ENCODE measurements at regions of chr1 and their contacts with region 1.

Region 1: GRCh38 chr1:203267347-203267846 is 37.9 kb upstream of the BTG2 start:
- DNase-seq: peak; percentile 92
- ATAC-seq: peak; percentile 63
- H3K4me3 ChIP-seq: peak overlapping the region; percentile 58 to 77 (median 65)
- H3K4me3 Mint-ChIP-seq: peak overlapping the region; percentile 89
- H3K27ac ChIP-seq: peak overlapping the region; percentile 45 to 58
- H3K27ac Mint-ChIP-seq: peak overlapping the region; percentile 76
- H3K4me1 ChIP-seq: peaks cover 30 to 40% of the 10 kb centered on the region in 2 donors
- H3K4me1 Mint-ChIP-seq: peaks cover 32% of the 10 kb centered on the region
- H3K27me3 ChIP-seq: no peaks in the 10 kb centered on the region
- H3K27me3 Mint-ChIP-seq: no peaks in the 10 kb centered on the region
- CTCF ChIP-seq: peak; percentile 92

Region 2: GRCh38 chr1:203038891-203039608 is 228.3 kb before region 1 on chr1:
- CTCF ChIA-PET with region 1: interaction called, 30 read pairs
- POLR2A ChIA-PET with region 1: no interaction called
- intact Hi-C with region 1: no loop called
- DNase-seq: peak; percentile 73
- ATAC-seq: peak; percentile 78
- H3K4me3 ChIP-seq: no peak overlapping the region
- H3K4me3 Mint-ChIP-seq: no peak overlapping the region
- H3K27ac ChIP-seq: no peak overlapping the region
- H3K27ac Mint-ChIP-seq: no peak overlapping the region
- H3K4me1 ChIP-seq: peaks cover 0 to 2% of the 10 kb centered on the region in 2 donors
- H3K4me1 Mint-ChIP-seq: peaks cover 1% of the 10 kb centered on the region
- H3K27me3 ChIP-seq: peaks cover 0 to 10% (median 2%) of the 10 kb centered on the region in 4 experiments
- H3K27me3 Mint-ChIP-seq: peaks cover 12% of the 10 kb centered on the region
- CTCF ChIP-seq: peak; percentile 93

Region 3: GRCh38 chr1:203172128-203173010 is 95.0 kb before region 1 on chr1:
- CTCF ChIA-PET with region 1: no interaction called
- POLR2A ChIA-PET with region 1: no interaction called
- intact Hi-C with region 1: no loop called
- DNase-seq: peak; percentile 45
- ATAC-seq: no peak
- H3K4me3 ChIP-seq: no peak overlapping the region
- H3K4me3 Mint-ChIP-seq: no peak overlapping the region
- H3K27ac ChIP-seq: no peak overlapping the region
- H3K27ac Mint-ChIP-seq: no peak overlapping the region
- H3K4me1 ChIP-seq: peaks cover 0 to 8% of the 10 kb centered on the region in 2 donors
- H3K4me1 Mint-ChIP-seq: peaks cover 1% of the 10 kb centered on the region
- H3K27me3 ChIP-seq: peaks cover 0 to 6% (median 0%) of the 10 kb centered on the region in 4 experiments
- H3K27me3 Mint-ChIP-seq: peaks cover 7% of the 10 kb centered on the region
- CTCF ChIP-seq: peak; percentile 70

Region 4: DNA sequence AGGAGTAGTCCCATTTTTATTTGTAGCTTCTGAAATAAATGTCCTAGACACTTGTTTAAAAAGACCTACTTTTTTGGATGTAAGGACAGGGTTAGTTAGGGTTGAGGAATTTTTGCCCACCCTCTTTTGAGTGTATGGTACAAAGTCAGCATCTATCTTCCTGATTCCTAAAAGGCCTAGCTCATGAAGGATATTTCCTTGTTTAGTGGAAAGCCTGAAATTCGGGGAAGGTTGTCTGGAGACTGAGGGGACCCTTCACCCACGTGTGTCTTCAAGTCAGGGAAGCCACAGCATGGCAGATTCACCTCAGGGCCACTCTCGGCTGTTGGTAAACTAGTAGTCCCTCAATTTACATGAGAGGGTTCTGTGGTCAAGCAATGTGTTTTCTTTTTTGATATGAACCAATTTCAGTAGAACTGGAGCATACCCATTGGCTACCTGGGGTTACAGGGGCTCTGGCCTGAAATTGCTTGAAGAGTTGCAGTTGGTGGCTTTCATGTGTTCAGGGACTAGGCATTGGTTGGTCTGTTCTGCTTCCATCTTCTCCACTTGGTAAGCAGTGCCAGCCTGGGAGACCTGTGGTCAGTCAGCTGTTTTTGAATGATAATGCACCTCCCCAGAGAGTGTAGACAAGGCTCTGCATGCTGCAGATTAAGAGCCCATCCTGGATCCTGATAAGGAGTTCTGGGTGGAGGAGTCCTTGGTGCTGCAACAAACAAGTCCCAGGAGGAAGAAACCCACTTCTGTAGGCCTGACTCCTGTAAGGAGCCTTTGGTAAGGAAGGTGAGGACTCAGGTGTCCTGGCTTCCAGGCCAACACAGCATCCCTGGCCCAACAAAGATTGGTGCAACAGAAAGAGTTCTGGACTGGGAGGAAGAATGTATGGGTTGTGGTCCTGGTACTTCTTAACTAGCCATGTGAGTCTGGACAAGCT is 44.2 kb after region 1 on chr1:
- CTCF ChIA-PET with region 1: interaction called, 396 read pairs
- POLR2A ChIA-PET with region 1: interaction called, 307 read pairs
- intact Hi-C with region 1: no loop called
- DNase-seq: no peak
- ATAC-seq: no peak
- H3K4me3 ChIP-seq: no peak overlapping the region
- H3K4me3 Mint-ChIP-seq: peak overlapping the region; percentile 99
- H3K27ac ChIP-seq: peak overlapping the region in 1 of 2 donors; percentile 26
- H3K27ac Mint-ChIP-seq: peak overlapping the region; percentile 83
- H3K4me1 ChIP-seq: peaks cover 53 to 63% of the 10 kb centered on the region in 2 donors
- H3K4me1 Mint-ChIP-seq: peaks cover 63% of the 10 kb centered on the region
- H3K27me3 ChIP-seq: no peaks in the 10 kb centered on the region
- H3K27me3 Mint-ChIP-seq: no peaks in the 10 kb centered on the region
- CTCF ChIP-seq: no peak

Region 5: DNA sequence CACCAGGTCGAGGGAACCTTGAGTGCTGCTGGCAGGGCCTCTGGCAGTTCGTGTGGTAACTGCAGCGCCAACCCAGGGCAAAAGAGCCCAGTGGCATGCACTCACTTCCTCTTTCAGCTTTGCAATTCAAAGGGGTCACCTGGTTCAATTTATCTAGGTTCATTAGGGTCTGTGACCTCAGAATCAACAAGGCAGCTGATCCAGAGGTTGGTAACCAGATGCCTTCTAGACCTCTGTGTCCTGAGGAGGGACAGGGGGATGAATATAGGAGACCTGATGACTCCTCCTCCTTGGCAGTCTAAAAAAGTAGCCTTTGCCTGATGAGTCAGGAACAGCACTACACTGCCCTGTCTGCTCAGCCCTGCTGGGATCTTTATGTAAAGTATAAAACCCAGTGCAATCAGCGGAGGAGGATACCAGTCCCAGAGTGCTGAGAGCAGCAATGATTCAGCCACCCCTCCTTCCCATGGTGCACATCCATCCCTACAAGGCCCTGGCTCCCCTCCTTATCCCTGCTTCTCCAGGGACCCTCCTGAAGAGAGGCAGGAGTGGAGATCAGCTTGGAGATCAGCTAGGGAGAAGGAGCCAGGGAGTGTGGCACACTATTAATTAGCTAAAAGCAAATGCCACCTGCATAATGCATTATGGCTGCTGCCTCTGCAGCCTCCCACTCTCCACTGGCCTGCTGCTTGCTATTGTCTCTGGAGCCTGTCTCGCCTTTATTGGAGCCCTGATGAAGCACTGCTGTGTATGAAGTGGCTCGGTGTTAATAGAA is 94.7 kb after region 1 on chr1:
- CTCF ChIA-PET with region 1: interaction called, 12 read pairs
- POLR2A ChIA-PET with region 1: no interaction called
- intact Hi-C with region 1: no loop called
- DNase-seq: peak; percentile 72
- ATAC-seq: peak; percentile 93
- H3K4me3 ChIP-seq: no peak overlapping the region
- H3K4me3 Mint-ChIP-seq: no peak overlapping the region
- H3K27ac ChIP-seq: no peak overlapping the region
- H3K27ac Mint-ChIP-seq: peak overlapping the region; percentile 41
- H3K4me1 ChIP-seq: peaks cover 18 to 19% of the 10 kb centered on the region in 2 donors
- H3K4me1 Mint-ChIP-seq: peaks cover 20% of the 10 kb centered on the region
- H3K27me3 ChIP-seq: peaks cover 0 to 6% (median 0%) of the 10 kb centered on the region in 4 experiments
- H3K27me3 Mint-ChIP-seq: peaks cover 19% of the 10 kb centered on the region
- CTCF ChIP-seq: no peak

Region 6: GRCh38 chr1:203440771-203441170 is 173.4 kb after region 1 on chr1:
- CTCF ChIA-PET with region 1: interaction called, 98 read pairs
- POLR2A ChIA-PET with region 1: no interaction called
- intact Hi-C with region 1: loop called (anchors 2 kb)
- DNase-seq: peak; percentile 38
- ATAC-seq: peak; percentile 39
- H3K4me3 ChIP-seq: no peak overlapping the region
- H3K4me3 Mint-ChIP-seq: no peak overlapping the region
- H3K27ac ChIP-seq: no peak overlapping the region
- H3K27ac Mint-ChIP-seq: no peak overlapping the region
- H3K4me1 ChIP-seq: no peaks in the 10 kb centered on the region
- H3K4me1 Mint-ChIP-seq: no peaks in the 10 kb centered on the region
- H3K27me3 ChIP-seq: peaks cover 0 to 15% (median 0%) of the 10 kb centered on the region in 4 experiments
- H3K27me3 Mint-ChIP-seq: peaks cover 24% of the 10 kb centered on the region
- CTCF ChIP-seq: no peak

Region 7: DNA sequence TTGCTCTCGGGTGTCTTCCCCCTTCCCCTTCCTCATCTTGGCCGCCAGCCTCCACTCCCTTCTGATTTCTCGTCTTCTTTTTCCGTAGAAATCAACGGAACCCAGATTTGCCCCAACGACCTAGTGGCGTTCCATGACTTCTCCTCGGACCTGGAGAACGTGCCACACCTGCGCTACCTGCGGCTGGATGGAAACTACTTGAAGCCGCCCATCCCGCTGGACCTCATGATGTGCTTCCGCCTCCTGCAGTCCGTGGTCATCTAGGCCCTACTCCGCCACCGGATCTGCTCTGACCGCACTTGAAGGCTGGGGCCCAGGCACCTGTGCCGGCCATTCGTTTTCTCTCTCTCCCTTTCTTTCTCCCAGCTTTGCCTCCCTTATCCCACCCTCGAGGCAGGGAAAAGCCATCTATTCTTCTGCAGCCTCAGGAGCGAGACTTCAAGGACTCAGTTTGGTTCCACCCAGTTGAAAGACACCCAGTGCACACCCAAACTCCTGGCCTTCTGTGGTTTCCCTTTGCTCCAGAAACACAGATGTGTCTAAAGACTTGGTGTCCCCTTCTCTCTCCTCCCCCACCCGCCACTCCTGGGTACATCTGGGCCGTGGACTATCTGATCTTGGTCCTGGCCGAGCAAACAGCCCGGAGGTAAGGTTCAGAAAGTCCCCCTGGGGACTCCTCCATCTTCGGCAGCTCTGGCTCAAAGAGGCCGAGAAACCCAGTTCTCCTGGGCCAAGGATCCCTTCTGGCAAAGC is 219.4 kb after region 1 on chr1:
- CTCF ChIA-PET with region 1: interaction called, 315 read pairs
- POLR2A ChIA-PET with region 1: interaction called, 4 read pairs
- intact Hi-C with region 1: loop called (anchors 1 kb)
- DNase-seq: no peak
- ATAC-seq: no peak
- H3K4me3 ChIP-seq: no peak overlapping the region
- H3K4me3 Mint-ChIP-seq: peak overlapping the region; percentile 90
- H3K27ac ChIP-seq: no peak overlapping the region
- H3K27ac Mint-ChIP-seq: peak overlapping the region; percentile 53
- H3K4me1 ChIP-seq: peaks cover 0 to 10% of the 10 kb centered on the region in 2 donors
- H3K4me1 Mint-ChIP-seq: peaks cover 9% of the 10 kb centered on the region
- H3K27me3 ChIP-seq: peaks cover 0 to 2% (median 0%) of the 10 kb centered on the region in 4 experiments
- H3K27me3 Mint-ChIP-seq: peaks cover 8% of the 10 kb centered on the region
- CTCF ChIP-seq: no peak

Region 8: GRCh38 chr1:203702130-203702577 is 434.8 kb after region 1 on chr1:
- CTCF ChIA-PET with region 1: interaction called, 23 read pairs
- POLR2A ChIA-PET with region 1: no interaction called
- intact Hi-C with region 1: loop called (anchors 1 kb)
- DNase-seq: peak; percentile 78
- ATAC-seq: peak; percentile 64
- H3K4me3 ChIP-seq: no peak overlapping the region
- H3K4me3 Mint-ChIP-seq: no peak overlapping the region
- H3K27ac ChIP-seq: no peak overlapping the region
- H3K27ac Mint-ChIP-seq: no peak overlapping the region
- H3K4me1 ChIP-seq: peaks cover 0 to 9% of the 10 kb centered on the region in 2 donors
- H3K4me1 Mint-ChIP-seq: peaks cover 2% of the 10 kb centered on the region
- H3K27me3 ChIP-seq: no peaks in the 10 kb centered on the region
- H3K27me3 Mint-ChIP-seq: no peaks in the 10 kb centered on the region
- CTCF ChIP-seq: peak; percentile 90

Measured in B cell (primary cell).